ENCODE measurements at regions of chr6 and their contacts with region 1.

Region 1: GRCh38 chr6:90274451-90275030 is 22.1 kb downstream of the BACH2 start:
- DNase-seq: peak; percentile 96
- H3K4me3 Mint-ChIP-seq: peak overlapping the region; percentile 36
- H3K27ac Mint-ChIP-seq: peak overlapping the region; percentile 97
- H3K4me1 Mint-ChIP-seq: peaks cover 91% of the 10 kb centered on the region
- H3K27me3 Mint-ChIP-seq: no peaks in the 10 kb centered on the region

Region 2: GRCh38 chr6:89829591-89830385 is 444.8 kb before region 1 on chr6 and contains the start of gene CASP8AP2:
- CTCF ChIA-PET with region 1: no interaction called
- intact Hi-C with region 1: no loop called
- DNase-seq: peak; percentile 98
- H3K4me3 Mint-ChIP-seq: peak within 1 kb of the TSS; percentile 99
- H3K27ac Mint-ChIP-seq: peak within 1 kb of the TSS; percentile 96
- H3K4me1 Mint-ChIP-seq: peaks cover 33% of the 10 kb centered on the region
- H3K27me3 Mint-ChIP-seq: no peaks in the 10 kb centered on the region
- total RNA-seq, gene CASP8AP2: 27.4 to 30.2 TPM

Region 3: GRCh38 chr6:90025523-90026061 is 248.9 kb before region 1 on chr6:
- CTCF ChIA-PET with region 1: no interaction called
- intact Hi-C with region 1: loop called (anchors 1 kb)
- DNase-seq: peak; percentile 85
- H3K4me3 Mint-ChIP-seq: peak overlapping the region; percentile 47
- H3K27ac Mint-ChIP-seq: peak overlapping the region; percentile 87
- H3K4me1 Mint-ChIP-seq: peaks cover 93% of the 10 kb centered on the region
- H3K27me3 Mint-ChIP-seq: no peaks in the 10 kb centered on the region

Region 4: DNA sequence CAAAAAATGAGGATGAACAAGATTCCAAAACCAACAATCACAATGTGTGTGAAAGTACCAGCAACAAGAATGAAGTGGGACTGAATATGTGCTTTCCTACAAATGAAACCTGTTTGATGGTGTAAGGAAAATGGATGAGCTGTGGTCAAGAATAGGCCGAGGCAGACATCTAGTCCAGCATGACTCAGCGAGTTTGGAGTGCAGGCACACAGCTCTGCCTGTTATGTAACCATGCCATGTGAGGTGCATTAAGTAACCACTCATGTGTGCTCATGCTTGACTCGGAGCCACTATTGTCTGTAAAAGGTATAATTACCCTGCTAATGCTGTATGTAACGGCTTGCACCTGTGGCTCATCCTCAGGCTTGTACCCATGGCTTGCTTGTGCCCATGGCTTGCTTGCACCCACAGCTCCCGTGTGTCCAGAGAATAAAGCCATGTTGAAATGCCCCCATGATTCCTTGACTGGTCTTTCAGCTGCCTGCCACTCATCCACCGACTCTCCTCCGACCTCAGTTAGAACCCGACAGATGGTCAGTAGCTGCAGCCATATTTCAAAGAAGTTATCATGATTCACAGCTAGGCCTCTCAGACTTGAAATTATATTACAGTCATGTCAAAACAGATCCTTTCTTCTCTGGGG is 76.6 kb before region 1 on chr6:
- CTCF ChIA-PET with region 1: no interaction called
- intact Hi-C with region 1: loop called (anchors 1 kb)
- DNase-seq: peak; percentile 47
- H3K4me3 Mint-ChIP-seq: no peak overlapping the region
- H3K27ac Mint-ChIP-seq: peak overlapping the region; percentile 80
- H3K4me1 Mint-ChIP-seq: peaks cover 92% of the 10 kb centered on the region
- H3K27me3 Mint-ChIP-seq: no peaks in the 10 kb centered on the region

Region 5: DNA sequence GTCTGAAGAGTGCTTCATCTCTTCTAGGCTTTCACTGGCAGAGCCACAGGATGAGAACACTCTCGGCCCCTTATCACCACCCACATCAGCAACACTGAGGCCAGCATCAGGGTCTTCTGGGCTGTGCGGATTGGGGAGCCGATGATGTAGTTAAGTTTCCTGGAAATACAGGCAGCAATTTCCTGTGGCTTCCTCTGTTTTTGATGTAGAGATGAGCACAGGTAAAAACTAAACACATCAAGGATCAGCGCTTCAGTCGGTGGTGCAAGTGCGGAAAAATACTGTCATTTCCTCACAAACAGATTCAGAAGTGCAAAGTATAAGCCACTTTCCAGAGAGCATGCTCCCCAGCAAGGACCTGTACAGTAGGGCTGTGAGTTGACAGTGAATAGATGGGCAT is 40.5 kb before region 1 on chr6:
- CTCF ChIA-PET with region 1: interaction called, 3 read pairs
- intact Hi-C with region 1: loop called (anchors 1 kb)
- DNase-seq: peak; percentile 77
- H3K4me3 Mint-ChIP-seq: peak overlapping the region; percentile 60
- H3K27ac Mint-ChIP-seq: peak overlapping the region; percentile 95
- H3K4me1 Mint-ChIP-seq: peaks cover 94% of the 10 kb centered on the region
- H3K27me3 Mint-ChIP-seq: no peaks in the 10 kb centered on the region

Region 6: DNA sequence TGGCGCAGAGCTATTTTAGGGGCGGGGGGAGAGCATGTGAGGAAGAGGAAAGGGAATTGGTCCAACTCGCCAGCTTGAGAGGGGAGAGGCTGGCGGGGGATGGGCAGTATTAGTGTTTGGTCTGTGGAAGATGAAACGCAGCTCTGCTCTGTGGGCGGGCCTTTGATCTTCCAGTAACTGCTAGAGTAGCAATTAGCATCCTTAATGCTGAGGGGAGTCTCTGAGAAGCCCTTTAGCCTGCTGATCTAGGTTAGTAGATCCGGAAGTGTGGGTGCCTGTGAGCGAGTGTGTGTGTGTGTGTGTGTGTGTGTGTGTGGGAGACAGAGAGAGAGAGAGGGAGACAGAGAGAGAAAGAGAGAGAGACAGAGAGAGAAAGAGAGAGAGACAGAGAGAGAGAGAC is 139.3 kb after region 1 on chr6:
- CTCF ChIA-PET with region 1: no interaction called
- intact Hi-C with region 1: loop called (anchors 1 kb)
- DNase-seq: peak; percentile 96
- H3K4me3 Mint-ChIP-seq: peak overlapping the region; percentile 71
- H3K27ac Mint-ChIP-seq: peak overlapping the region; percentile 94
- H3K4me1 Mint-ChIP-seq: peaks cover 69% of the 10 kb centered on the region
- H3K27me3 Mint-ChIP-seq: no peaks in the 10 kb centered on the region

Region 7: GRCh38 chr6:90466154-90466940 is 191.8 kb after region 1 on chr6:
- CTCF ChIA-PET with region 1: no interaction called
- intact Hi-C with region 1: loop called (anchors 1 kb)
- DNase-seq: peak; percentile 73
- H3K4me3 Mint-ChIP-seq: no peak overlapping the region
- H3K27ac Mint-ChIP-seq: peak overlapping the region; percentile 90
- H3K4me1 Mint-ChIP-seq: peaks cover 82% of the 10 kb centered on the region
- H3K27me3 Mint-ChIP-seq: no peaks in the 10 kb centered on the region

Region 8: DNA sequence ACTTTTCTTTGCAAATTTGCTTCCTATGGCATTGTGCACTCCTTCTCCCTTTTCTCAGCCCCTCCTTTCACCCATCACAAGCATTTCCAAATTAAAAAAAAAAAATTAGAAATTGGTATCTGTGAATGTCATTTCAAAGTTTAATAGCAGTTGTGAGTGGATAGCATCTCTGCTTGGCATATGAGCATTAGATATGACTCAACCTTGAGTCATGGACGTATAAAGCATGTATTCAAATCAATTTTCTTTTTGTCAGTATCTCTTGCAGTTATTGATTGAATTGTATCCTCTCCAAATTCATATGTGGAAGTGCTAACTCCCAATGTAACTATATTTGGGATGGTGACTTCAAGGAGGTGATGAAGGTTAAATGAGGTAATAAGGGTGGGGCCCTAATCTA is 372.4 kb after region 1 on chr6:
- CTCF ChIA-PET with region 1: no interaction called
- intact Hi-C with region 1: no loop called
- DNase-seq: no peak
- H3K4me3 Mint-ChIP-seq: no peak overlapping the region
- H3K27ac Mint-ChIP-seq: no peak overlapping the region
- H3K4me1 Mint-ChIP-seq: no peaks in the 10 kb centered on the region
- H3K27me3 Mint-ChIP-seq: peaks cover 2% of the 10 kb centered on the region

Measured in activated naive CD4-positive, alpha-beta T cell treated with anti-CD3 and anti-CD28 coated beads for 36 hours (primary cell).